Left cardiac atrium (tissue), 4 donors: ENCODE measurements at regions of chr2 and their contacts with region 1.

Region 1: GRCh38 chr2:220674033-220674432 is 898.1 kb downstream of the EPHA4 start:
- DNase-seq: no peak
- ATAC-seq: no peak

Region 2: DNA sequence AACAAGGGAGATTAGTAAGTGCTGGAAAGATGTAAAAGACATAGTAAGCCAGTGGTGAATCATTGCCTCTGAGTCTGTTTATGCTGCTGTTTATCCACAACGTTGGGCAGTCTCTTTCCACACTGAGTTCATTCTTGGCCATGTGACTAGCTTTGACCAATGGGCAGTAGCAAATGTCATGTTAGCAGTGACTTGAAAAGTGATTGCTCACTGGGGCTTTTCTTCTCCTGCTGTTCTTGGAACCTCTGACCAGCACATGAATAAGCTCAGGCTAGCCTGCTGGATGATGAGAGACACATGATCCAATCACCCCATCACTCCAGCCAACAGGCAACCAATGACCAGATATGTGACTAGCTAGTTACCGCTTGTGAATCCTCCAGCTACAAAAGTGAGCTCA is 686.2 kb before region 1 on chr2:
- intact Hi-C with region 1: no loop called
- DNase-seq: no peak
- ATAC-seq: peak in 1 of 2 donors; percentile 69

Region 3: GRCh38 chr2:220104871-220105351 is 569.1 kb before region 1 on chr2:
- intact Hi-C with region 1: loop called in 1 of 2 experiments (anchors 10 kb)
- DNase-seq: peak; percentile 52
- ATAC-seq: peak; percentile 88 to 98

Region 4: DNA sequence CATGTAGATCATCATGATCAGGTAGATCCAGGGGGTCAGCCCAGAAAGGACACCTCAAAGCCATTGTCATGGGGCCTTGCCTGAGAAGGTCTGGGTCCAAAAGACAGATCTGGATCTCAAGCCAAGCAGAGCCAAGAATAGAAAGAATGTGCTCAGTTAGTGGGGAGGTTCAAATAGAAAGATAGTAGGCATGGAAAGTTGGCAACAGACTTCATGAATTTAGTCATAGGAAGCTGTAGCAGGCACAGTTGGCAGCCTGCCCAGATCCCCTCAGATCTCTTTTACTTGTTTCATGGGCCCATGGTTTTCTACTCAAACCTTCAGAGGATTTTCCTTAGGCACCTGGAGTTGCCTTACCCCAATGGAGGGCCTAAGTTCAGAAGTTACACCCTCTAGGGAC is 279.6 kb before region 1 on chr2:
- intact Hi-C with region 1: loop called in 1 of 2 experiments (anchors 10 kb)
- DNase-seq: peak; percentile 75
- ATAC-seq: peak; percentile 46 to 72

Region 5: GRCh38 chr2:220460257-220460985 is 213.6 kb before region 1 on chr2:
- intact Hi-C with region 1: loop called in 1 of 2 experiments (anchors 10 kb)
- DNase-seq: no peak
- ATAC-seq: no peak

Region 6: DNA sequence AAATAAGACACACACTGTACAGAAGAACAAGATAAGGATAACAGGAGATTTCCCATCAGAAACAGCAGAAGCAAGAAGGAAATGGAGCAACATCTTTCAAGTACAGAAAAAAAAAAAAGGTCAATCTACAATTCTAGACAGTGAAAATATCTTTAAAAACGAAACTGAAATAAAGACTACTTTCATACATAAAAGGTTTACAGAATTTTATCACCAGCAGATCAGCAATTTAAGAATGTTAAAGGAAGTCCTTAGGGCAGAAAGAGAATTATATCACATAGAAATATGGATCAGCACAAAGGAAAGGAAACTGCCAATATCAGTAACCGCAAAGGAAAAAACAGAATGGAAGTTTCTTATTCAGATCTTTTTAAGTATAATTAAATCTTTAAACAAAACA is 32.9 kb before region 1 on chr2:
- intact Hi-C with region 1: no loop called
- DNase-seq: no peak
- ATAC-seq: no peak